ENCODE measurements at regions of chr17 and their contacts with region 1.

Region 1: DNA sequence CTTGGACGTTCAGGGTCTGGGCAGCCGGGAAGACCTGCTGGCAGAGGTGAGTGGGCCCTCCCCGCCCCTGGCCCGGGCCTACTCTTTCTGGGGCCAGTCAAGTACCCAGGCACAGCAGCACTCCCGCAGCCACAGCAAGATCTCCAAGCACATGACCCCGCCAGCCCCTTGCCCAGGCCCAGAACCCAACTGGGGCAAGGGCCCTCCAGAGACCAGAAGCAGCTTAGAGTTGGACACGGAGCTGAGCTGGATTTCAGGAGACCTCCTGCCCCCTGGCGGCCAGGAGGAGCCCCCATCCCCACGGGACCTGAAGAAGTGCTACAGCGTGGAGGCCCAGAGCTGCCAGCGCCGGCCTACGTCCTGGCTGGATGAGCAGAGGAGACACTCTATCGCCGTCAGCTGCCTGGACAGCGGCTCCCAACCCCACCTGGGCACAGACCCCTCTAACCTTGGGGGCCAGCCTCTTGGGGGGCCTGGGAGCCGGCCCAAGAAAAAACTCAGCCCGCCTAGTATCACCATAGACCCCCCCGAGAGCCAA is 8.6 kb upstream of the ABCC3 start:
- DNase-seq: peak; percentile 88
- ATAC-seq: peak; percentile 66 to 84
- H3K4me3 ChIP-seq: no peak overlapping the region
- H3K27ac ChIP-seq: peak overlapping the region; percentile 71 to 83
- H3K4me1 ChIP-seq: peaks cover 54% of the 10 kb centered on the region
- CTCF ChIP-seq: peak; percentile 76
- EP300 ChIP-seq: no peak
- POLR2A ChIP-seq: no peak
- RAD21 ChIP-seq: peak; percentile 82 to 88

Region 2: GRCh38 chr17:50523208-50523607 is 102.9 kb before region 1 on chr17:
- CTCF ChIA-PET with region 1: no interaction called
- POLR2A ChIA-PET with region 1: no interaction called
- DNase-seq: no peak
- ATAC-seq: no peak
- H3K4me3 ChIP-seq: no peak overlapping the region
- H3K27ac ChIP-seq: no peak overlapping the region
- H3K4me1 ChIP-seq: no peaks in the 10 kb centered on the region
- CTCF ChIP-seq: no peak
- EP300 ChIP-seq: no peak
- POLR2A ChIP-seq: no peak
- RAD21 ChIP-seq: no peak

Region 3: DNA sequence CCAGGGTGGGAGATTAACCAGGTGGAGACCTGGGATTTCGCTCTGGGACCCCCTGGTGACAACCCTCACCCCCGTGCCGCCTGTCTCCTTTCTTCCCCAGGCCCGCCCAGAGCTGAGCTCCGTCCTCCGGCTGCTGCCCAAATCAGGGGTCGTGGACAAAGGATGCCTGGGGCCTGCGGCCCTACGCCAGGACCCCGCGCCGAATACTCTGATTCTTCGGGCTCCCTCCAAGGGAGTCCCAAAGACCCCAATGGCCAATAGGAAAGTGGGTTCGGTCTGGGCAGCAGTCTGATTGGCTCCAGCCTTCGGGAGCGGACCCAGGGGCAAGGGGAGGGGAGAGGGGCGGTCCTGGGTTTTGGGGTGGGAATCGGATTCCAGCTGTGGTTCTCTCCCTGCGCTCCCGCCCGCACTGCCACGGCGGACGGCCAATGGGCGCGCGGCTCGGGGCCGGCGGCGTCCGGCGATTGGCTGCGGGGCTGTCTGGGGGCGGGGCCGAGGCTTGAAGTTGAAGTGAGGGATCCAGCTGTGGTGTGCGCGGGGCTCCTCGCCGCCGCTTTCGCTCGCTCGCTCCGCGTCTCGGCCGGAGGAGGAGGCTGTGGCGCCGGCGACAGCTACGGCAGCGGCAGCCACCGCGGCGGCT is 65.8 kb before region 1 on chr17 and contains the start of gene CACNA1G:
- CTCF ChIA-PET with region 1: interaction called, 99 read pairs
- POLR2A ChIA-PET with region 1: interaction called, 4 read pairs
- DNase-seq: peak; percentile 93 to 99
- ATAC-seq: peak; percentile 77 to 90
- H3K4me3 ChIP-seq: peak within 1 kb of the TSS; percentile 69
- H3K27ac ChIP-seq: peak within 1 kb of the TSS; percentile 75 to 88
- H3K4me1 ChIP-seq: peaks cover 37% of the 10 kb centered on the region
- CTCF ChIP-seq: no peak
- EP300 ChIP-seq: no peak
- POLR2A ChIP-seq: peak; percentile 49
- RAD21 ChIP-seq: no peak
- polyA plus RNA-seq, gene CACNA1G: 4.0 and 4.9 TPM in 2 replicates

Region 4: DNA sequence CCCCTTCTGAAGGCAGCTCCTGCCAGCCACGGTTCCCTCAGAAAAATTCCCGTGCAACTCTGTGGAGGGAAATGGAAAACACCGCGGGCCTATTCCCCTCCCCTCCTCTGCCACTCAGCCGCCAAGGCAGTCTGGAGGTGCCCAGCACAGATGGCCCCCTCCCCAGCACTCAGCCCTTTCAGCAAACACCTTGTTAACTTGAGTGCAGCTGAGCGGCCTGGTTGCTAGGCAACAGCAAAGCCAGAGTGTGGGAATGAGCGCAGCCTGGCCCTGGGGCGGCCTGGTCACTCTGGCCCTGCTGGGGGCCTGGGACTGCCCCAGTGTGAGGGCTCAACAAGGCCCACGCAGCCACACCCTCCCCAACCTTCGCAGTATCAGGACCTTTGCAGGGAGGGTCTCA is 32.8 kb before region 1 on chr17:
- CTCF ChIA-PET with region 1: interaction called, 10 read pairs
- POLR2A ChIA-PET with region 1: no interaction called
- DNase-seq: no peak
- ATAC-seq: no peak; a peak in 1 of 6 replicates
- H3K4me3 ChIP-seq: no peak overlapping the region
- H3K27ac ChIP-seq: no peak overlapping the region
- H3K4me1 ChIP-seq: no peaks in the 10 kb centered on the region
- CTCF ChIP-seq: no peak
- EP300 ChIP-seq: no peak
- POLR2A ChIP-seq: no peak
- RAD21 ChIP-seq: no peak

Region 5: GRCh38 chr17:50613007-50613992 is 12.8 kb before region 1 on chr17:
- CTCF ChIA-PET with region 1: interaction called, 142 read pairs
- POLR2A ChIA-PET with region 1: no interaction called
- DNase-seq: no peak
- ATAC-seq: no peak
- H3K4me3 ChIP-seq: no peak overlapping the region
- H3K27ac ChIP-seq: no peak overlapping the region; a peak in 1 of 6 replicates
- H3K4me1 ChIP-seq: peaks cover 10% of the 10 kb centered on the region
- CTCF ChIP-seq: no peak
- EP300 ChIP-seq: no peak
- POLR2A ChIP-seq: no peak
- RAD21 ChIP-seq: no peak

Region 6: GRCh38 chr17:50649042-50649904 is 23.2 kb after region 1 on chr17:
- CTCF ChIA-PET with region 1: interaction called, 37 read pairs
- POLR2A ChIA-PET with region 1: no interaction called
- DNase-seq: peak in 1 of 2 experiments; percentile 90
- ATAC-seq: peak; percentile 48 to 63; a peak in 5 of 6 replicates
- H3K4me3 ChIP-seq: no peak overlapping the region
- H3K27ac ChIP-seq: peak overlapping the region; percentile 51 to 99
- H3K4me1 ChIP-seq: peaks cover 95% of the 10 kb centered on the region
- CTCF ChIP-seq: no peak
- EP300 ChIP-seq: no peak
- POLR2A ChIP-seq: no peak
- RAD21 ChIP-seq: no peak